ENCODE measurements at regions of chr22 and their contacts with region 1.

Region 1: GRCh38 chr22:32985899-32986765 is 72.0 kb downstream of the SYN3 start:
- DNase-seq: peak; percentile 44 to 50
- ATAC-seq: peak; percentile 95
- H3K4me3 ChIP-seq: no peak overlapping the region
- H3K27ac ChIP-seq: no peak overlapping the region
- H3K4me1 ChIP-seq: peaks cover 0 to 3% of the 10 kb centered on the region in 2 donors
- H3K27me3 ChIP-seq: no peaks in the 10 kb centered on the region
- CTCF ChIP-seq: peak; percentile 50 to 88 (median 78)
- POLR2A ChIP-seq: no peak

Region 2: DNA sequence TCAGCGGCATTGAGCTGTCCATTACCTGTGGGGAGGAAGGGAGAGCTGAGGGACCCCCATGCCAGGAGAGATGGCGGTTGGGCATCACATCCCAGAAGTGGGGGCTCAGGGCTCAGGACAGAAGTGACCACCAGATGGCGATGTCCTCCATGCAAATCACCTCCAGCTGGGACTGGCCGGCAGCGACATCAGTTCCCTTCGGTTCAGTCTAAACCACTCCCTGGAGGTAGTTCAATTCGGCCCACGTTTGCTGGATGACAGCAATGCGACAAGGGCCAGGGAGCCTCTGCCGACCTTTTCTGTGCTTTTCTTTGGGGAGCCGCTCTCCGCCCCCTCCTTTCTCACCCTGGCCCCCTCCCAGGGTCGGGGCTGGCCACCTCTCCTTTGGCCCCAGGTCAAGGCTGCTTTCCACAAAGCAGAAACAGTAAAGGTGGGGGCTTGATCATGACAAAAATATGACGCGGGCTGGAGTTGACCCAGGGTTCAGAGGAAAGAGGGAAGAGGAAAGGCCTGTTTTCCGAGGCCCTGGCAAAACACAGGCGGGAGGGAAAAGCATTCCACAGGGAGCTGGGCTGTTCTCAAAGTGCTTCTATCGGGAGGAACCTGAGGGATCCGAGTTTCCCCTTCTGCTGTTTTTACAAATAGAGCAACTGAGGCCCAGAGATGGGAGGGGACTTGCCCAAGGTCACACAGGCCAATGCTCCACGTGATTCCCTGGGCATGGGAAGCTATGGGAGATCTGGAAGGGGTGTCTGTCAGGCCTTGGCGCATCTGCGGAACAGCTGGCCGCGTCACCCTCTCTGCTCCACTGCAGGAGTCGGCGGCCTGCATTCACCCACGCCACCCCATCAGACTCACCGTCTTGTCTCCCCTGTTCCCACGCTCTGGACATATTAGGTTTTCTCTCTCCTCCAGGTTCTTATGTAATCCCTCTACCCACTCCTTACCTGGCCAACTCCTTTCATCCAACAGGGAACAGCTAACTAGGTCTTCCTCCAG is 456.8 kb before region 1 on chr22:
- in situ Hi-C with region 1: loop called in 2 of 4 experiments (anchors 5 to 10 kb)
- intact Hi-C with region 1: loop called (anchors 1 kb)
- DNase-seq: peak; percentile 68 to 77
- ATAC-seq: peak; percentile 60 to 62
- H3K4me3 ChIP-seq: peak overlapping the region in 1 of 4 donors; percentile 35
- H3K27ac ChIP-seq: peak overlapping the region; percentile 71 to 87 (median 78)
- H3K4me1 ChIP-seq: peaks cover 17 to 33% of the 10 kb centered on the region in 2 donors
- H3K27me3 ChIP-seq: no peaks in the 10 kb centered on the region
- CTCF ChIP-seq: peak; percentile 59 to 89 (median 85)
- POLR2A ChIP-seq: no peak

Region 3: DNA sequence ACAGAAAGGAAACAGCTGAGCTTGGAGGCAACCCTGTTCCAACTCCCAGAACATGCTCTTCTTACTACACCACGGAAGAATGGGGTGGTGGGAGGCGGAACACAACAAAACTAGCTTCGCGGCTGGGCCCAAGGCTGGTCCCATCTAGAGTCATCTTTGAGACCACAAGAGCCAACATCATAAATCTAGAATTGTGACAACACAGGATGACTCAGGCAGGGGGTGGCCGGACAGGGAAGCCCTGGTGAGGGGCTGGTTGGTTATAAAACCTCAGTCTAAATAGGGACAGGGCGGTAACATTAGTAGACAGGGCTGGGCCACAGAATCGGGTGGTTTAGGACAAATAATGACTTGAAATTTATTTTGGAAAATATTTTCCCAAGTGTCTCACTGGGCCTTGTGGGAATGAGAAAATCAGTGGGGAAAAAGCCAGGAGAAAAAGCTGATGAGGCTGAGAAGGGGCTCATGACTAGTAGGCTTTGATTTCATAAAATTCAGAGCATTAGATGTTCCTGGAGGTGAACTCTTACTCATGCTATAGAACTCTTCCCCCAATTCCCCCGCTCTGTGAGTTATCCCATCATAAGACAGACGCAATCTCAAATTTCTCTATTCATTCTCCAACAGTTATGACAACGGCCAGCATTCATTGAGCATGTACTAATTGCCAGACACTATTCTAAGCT is 336.5 kb before region 1 on chr22:
- in situ Hi-C with region 1: loop called (anchors 10 to 25 kb)
- intact Hi-C with region 1: no loop called
- DNase-seq: peak; percentile 4 to 59
- ATAC-seq: peak; percentile 55 to 71
- H3K4me3 ChIP-seq: no peak overlapping the region
- H3K27ac ChIP-seq: peak overlapping the region; percentile 8 to 53 (median 30)
- H3K4me1 ChIP-seq: no peaks in the 10 kb centered on the region
- H3K27me3 ChIP-seq: no peaks in the 10 kb centered on the region
- CTCF ChIP-seq: no peak
- POLR2A ChIP-seq: no peak

Region 4: GRCh38 chr22:32660292-32660691 is 325.8 kb before region 1 on chr22:
- in situ Hi-C with region 1: loop called (anchors 10 to 25 kb)
- intact Hi-C with region 1: loop called (anchors 5 kb)
- DNase-seq: peak; percentile 13 to 52
- ATAC-seq: peak in 1 of 2 donors; percentile 58
- H3K4me3 ChIP-seq: no peak overlapping the region
- H3K27ac ChIP-seq: no peak overlapping the region
- H3K4me1 ChIP-seq: no peaks in the 10 kb centered on the region
- H3K27me3 ChIP-seq: peaks cover 0 to 2% (median 0%) of the 10 kb centered on the region in 3 donors
- CTCF ChIP-seq: peak; percentile 42 to 60 (median 58)
- POLR2A ChIP-seq: no peak

Region 5: DNA sequence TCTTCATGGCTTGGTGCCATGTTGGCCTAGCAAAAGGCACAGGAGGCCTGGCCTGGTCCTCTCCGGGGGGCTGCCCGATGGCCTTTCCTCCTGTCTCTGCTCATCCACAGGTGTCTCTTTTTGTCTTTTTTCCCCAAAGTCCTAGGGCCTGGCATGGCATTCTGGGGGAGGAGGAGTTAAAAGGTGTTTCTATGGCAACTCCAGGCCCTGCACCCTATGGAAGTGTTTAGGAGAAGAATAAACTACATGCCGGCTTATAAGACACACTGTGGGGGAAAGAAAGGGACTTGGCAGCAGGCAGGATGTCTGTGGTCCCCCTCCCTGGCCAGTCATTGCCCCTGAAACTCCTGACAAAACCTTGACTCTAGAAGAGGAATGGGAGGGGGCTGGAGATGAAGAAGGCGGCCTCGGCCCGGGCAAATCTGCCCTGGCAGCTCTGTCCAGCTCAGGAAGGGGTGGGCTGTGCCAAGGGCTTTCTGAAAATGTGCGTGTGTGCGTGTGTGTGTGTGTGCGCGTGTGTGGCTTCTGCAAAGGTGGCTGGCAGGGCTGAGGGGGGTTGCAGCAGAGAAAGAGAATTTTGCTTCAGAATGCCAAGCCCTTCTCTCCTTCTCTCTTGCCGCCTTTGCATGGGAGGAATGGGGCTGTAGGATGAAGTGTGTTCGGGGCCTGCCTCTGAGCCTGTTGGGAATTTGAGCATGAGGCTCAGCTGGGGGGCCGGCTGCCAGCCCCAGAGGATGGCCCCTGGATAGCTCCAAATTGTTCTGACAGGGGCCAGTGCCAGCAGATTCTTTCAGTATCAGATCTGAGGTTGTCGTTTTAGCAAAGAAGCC is 181.4 kb before region 1 on chr22:
- in situ Hi-C with region 1: no loop called
- intact Hi-C with region 1: loop called (anchors 5 kb)
- DNase-seq: no peak
- ATAC-seq: no peak
- H3K4me3 ChIP-seq: peak overlapping the region; percentile 64 to 71 (median 67)
- H3K27ac ChIP-seq: peak overlapping the region; percentile 79 to 87 (median 83)
- H3K4me1 ChIP-seq: peaks cover 17 to 21% of the 10 kb centered on the region in 2 donors
- H3K27me3 ChIP-seq: peaks cover 7 to 13% (median 13%) of the 10 kb centered on the region in 3 donors
- CTCF ChIP-seq: no peak
- POLR2A ChIP-seq: no peak

Region 6: GRCh38 chr22:32920032-32920628 is 66.0 kb before region 1 on chr22:
- in situ Hi-C with region 1: no loop called
- intact Hi-C with region 1: loop called (anchors 5 kb)
- DNase-seq: peak; percentile 40 to 61
- ATAC-seq: peak; percentile 77 to 83
- H3K4me3 ChIP-seq: no peak overlapping the region
- H3K27ac ChIP-seq: no peak overlapping the region
- H3K4me1 ChIP-seq: peaks cover 0 to 4% of the 10 kb centered on the region in 2 donors
- H3K27me3 ChIP-seq: peaks cover 0 to 2% (median 0%) of the 10 kb centered on the region in 3 donors
- CTCF ChIP-seq: no peak
- POLR2A ChIP-seq: no peak